Activated T-helper 2 cell treated with anti-CD3 and anti-CD28 coated beads, Interferon-gamma antibody, Interleukin-2, Interleukin-4, amounts not matched to agents 10 μg/mL and 5 μg/mL and 100 μg/mL, durations not matched to agents 14 hours and 24 hours and 36 hours (primary cell): ENCODE measurements at regions of chr2 and their contacts with region 1.

Region 1: GRCh38 chr2:39919511-39920306 is 140.7 kb upstream of the THUMPD2 start:
- DNase-seq: peak; percentile 35
- H3K4me3 Mint-ChIP-seq: peak overlapping the region; percentile 81
- H3K27ac Mint-ChIP-seq: peak overlapping the region; percentile 91
- H3K4me1 Mint-ChIP-seq: peaks cover 72% of the 10 kb centered on the region
- H3K27me3 Mint-ChIP-seq: no peaks in the 10 kb centered on the region

Region 2: GRCh38 chr2:39938035-39938835 is 18.5 kb after region 1 on chr2:
- intact Hi-C with region 1: loop called (anchors 2 kb)
- DNase-seq: no peak
- H3K4me3 Mint-ChIP-seq: peak overlapping the region; percentile 79
- H3K27ac Mint-ChIP-seq: peak overlapping the region; percentile 98
- H3K4me1 Mint-ChIP-seq: peaks cover 68% of the 10 kb centered on the region
- H3K27me3 Mint-ChIP-seq: no peaks in the 10 kb centered on the region

Region 3: GRCh38 chr2:39996653-39997080 is 77.0 kb after region 1 on chr2:
- intact Hi-C with region 1: loop called (anchors 1 kb)
- DNase-seq: no peak
- H3K4me3 Mint-ChIP-seq: no peak overlapping the region
- H3K27ac Mint-ChIP-seq: peak overlapping the region; percentile 87
- H3K4me1 Mint-ChIP-seq: peaks cover 47% of the 10 kb centered on the region
- H3K27me3 Mint-ChIP-seq: no peaks in the 10 kb centered on the region

Region 4: DNA sequence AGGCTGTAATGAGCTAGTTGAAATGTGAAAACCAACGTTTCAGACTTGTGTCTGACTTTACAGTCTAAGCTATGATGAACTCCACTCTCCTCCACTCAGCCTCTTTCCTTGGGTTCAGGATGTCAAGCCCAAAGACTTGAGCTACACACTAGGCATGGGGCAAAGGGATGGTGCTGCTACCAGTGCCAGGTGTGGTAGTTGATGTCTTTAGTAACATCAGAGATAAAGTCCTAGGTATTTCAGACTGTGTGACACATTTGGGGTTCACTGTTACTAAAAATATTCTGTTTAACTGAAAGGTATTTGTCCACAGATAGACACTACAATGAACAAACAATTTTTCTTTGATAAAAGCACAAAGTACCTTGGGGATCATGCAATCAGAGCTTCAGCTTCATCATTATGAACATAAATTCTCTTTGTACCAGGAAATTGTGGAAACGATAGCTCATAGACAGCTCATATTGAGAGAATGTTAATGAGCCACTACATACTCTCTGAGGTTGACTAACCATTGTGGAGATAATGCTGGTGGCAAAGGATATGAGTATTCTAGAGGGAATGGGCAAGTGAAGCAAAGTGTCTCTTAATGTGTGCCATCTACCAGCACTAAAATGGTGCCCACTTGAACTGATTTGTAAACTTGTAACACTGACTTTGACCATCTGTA is 113.1 kb after region 1 on chr2:
- intact Hi-C with region 1: loop called (anchors 5 kb)
- DNase-seq: no peak
- H3K4me3 Mint-ChIP-seq: no peak overlapping the region
- H3K27ac Mint-ChIP-seq: peak overlapping the region; percentile 75
- H3K4me1 Mint-ChIP-seq: peaks cover 45% of the 10 kb centered on the region
- H3K27me3 Mint-ChIP-seq: no peaks in the 10 kb centered on the region

Region 5: GRCh38 chr2:40401896-40402295 is 482.2 kb after region 1 on chr2:
- intact Hi-C with region 1: loop called (anchors 2 kb)
- DNase-seq: no peak
- H3K4me3 Mint-ChIP-seq: no peak overlapping the region
- H3K27ac Mint-ChIP-seq: peak overlapping the region; percentile 43
- H3K4me1 Mint-ChIP-seq: peaks cover 26% of the 10 kb centered on the region
- H3K27me3 Mint-ChIP-seq: no peaks in the 10 kb centered on the region